Activated B cell treated with CpG ODN at 0.5 μM for 24 hours (primary cell): ENCODE measurements at regions of chr5 and their contacts with region 1.

Region 1: GRCh38 chr5:54719384-54720283 is 202.1 kb downstream of the SNX18 start:
- DNase-seq: no peak
- ATAC-seq: no peak
- H3K4me3 Mint-ChIP-seq: no peak overlapping the region
- H3K27ac Mint-ChIP-seq: no peak overlapping the region
- H3K4me1 Mint-ChIP-seq: peaks cover 30% of the 10 kb centered on the region
- H3K27me3 Mint-ChIP-seq: no peaks in the 10 kb centered on the region
- CTCF ChIP-seq: no peak

Region 2: DNA sequence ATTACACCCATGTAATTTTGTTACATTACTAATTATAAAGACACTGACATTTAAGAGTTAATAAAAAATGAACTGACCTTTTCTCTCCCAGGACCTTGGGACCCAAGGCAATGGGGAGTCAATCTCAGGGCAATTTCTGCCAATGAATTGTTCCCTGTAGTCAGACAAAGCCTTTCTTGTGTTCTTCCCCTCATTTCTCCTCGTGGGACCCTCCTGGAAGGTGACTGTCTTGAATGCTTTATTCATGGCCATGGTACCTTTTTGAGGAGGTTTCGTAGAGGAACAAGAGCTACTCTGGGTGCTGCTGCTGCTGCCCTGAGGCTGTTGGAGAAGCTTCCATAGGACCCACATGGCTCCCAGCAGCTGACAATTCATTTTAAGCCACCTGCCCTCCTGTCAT is 11.8 kb before region 1 on chr5:
- CTCF ChIA-PET with region 1: no interaction called
- POLR2A ChIA-PET with region 1: interaction called, 3 read pairs
- intact Hi-C with region 1: loop called (anchors 2 kb)
- DNase-seq: no peak
- ATAC-seq: no peak
- H3K4me3 Mint-ChIP-seq: no peak overlapping the region
- H3K27ac Mint-ChIP-seq: no peak overlapping the region
- H3K4me1 Mint-ChIP-seq: peaks cover 23% of the 10 kb centered on the region
- H3K27me3 Mint-ChIP-seq: peaks cover 2% of the 10 kb centered on the region
- CTCF ChIP-seq: no peak

Region 3: DNA sequence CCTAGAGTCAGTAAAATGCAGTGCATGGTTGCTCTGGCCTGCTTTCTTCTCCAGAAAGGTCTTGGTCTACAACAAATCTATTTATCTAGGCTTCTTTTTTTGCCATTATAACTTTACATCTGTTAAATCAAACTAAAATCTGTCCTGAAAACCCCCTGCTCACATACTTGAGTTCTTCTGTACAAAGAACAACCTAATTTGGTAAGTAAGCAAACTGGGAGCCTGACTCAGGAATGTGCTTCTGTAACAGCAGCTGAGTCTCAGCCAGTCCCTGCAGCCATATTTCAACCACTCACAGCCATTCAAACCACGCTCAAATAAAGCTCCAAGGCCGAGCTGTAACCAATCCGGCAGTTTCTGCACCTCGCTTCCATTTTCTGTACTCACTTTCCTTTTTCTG is 719.4 kb after region 1 on chr5:
- CTCF ChIA-PET with region 1: no interaction called
- POLR2A ChIA-PET with region 1: no interaction called
- intact Hi-C with region 1: no loop called
- DNase-seq: no peak
- ATAC-seq: no peak
- H3K4me3 Mint-ChIP-seq: no peak overlapping the region
- H3K27ac Mint-ChIP-seq: no peak overlapping the region
- H3K4me1 Mint-ChIP-seq: peaks cover 7% of the 10 kb centered on the region
- H3K27me3 Mint-ChIP-seq: no peaks in the 10 kb centered on the region
- CTCF ChIP-seq: no peak